ENCODE measurements at regions of chr3 and their contacts with region 1.

Region 1: GRCh38 chr3:28218071-28218916 is 23.1 kb upstream of the CMC1 start:
- DNase-seq: no peak
- H3K4me3 ChIP-seq: no peak overlapping the region
- H3K27ac ChIP-seq: no peak overlapping the region
- H3K4me1 ChIP-seq: no peaks in the 10 kb centered on the region
- H3K27me3 ChIP-seq: no peaks in the 10 kb centered on the region
- CTCF ChIP-seq: no peak

Region 2: GRCh38 chr3:28188686-28189085 is 29.6 kb before region 1 on chr3:
- CTCF ChIA-PET with region 1: no interaction called
- dilution Hi-C with region 1: loop called (anchors 5 kb)
- in situ Hi-C with region 1: no loop called
- intact Hi-C with region 1: no loop called
- DNase-seq: no peak
- H3K4me3 ChIP-seq: no peak overlapping the region
- H3K27ac ChIP-seq: no peak overlapping the region
- H3K4me1 ChIP-seq: no peaks in the 10 kb centered on the region
- H3K27me3 ChIP-seq: no peaks in the 10 kb centered on the region
- CTCF ChIP-seq: no peak

Measured in mammary epithelial cell (primary cell).